Activated T-helper 1 cell treated with anti-CD3 and anti-CD28 coated beads, Interleukin-12 subunit alpha, Interleukin-12 subunit beta, Interleukin-2, Interleukin-4 antibody, amounts not matched to agents 30 ng/mL and 10 ng/mL and 1 ng/mL, durations not matched to agents 14 hours and 24 hours and 36 hours (primary cell): ENCODE measurements at regions of chr10 and their contacts with region 1.

Region 1: DNA sequence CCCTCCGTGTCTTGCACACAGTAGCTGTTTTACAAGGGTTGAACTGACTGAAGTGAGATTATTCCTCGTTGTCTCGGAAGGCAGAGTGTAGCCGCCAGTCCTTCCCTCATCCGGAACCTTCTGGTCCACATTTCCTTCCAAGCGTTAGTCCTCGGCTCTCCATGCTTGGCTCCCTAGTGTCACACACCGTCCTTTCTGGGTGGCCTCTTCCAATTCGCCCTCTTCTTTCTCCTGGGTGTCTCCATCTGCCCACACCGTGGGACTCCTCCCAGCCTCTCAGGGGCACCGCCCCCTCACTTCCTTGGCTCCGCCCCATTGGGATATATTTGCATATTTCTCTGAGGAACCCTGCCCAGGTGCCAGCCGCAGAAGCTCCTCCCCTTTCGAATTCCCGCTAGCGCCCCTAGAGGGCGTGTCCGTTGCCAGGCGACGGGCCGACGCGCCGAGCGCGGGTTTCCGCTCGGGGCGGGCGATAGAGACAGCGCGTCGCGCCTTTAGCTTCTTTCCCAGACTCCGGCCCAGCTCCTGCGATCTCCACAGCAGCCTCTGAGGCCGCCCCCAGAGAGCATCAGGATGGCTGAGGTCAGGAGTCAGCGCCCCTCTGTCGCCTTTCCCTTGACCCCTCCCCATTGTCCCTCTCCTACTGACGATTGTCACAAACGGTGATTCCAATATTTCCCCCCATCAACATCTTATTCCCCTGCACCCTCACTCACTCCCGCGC is at the start of gene CFAP58:
- DNase-seq: peak; percentile 89
- H3K4me3 Mint-ChIP-seq: no peak within 1 kb of the TSS
- H3K27ac Mint-ChIP-seq: peak within 1 kb of the TSS; percentile 67
- H3K4me1 Mint-ChIP-seq: no peaks in the 10 kb centered on the region
- H3K27me3 Mint-ChIP-seq: peaks cover 2% of the 10 kb centered on the region
- total RNA-seq, gene CFAP58: 0.08 and 0.24 TPM in 2 replicates

Region 2: GRCh38 chr10:104218751-104219150 is 134.7 kb before region 1 on chr10:
- intact Hi-C with region 1: no loop called
- DNase-seq: no peak
- H3K4me3 Mint-ChIP-seq: no peak overlapping the region
- H3K27ac Mint-ChIP-seq: no peak overlapping the region
- H3K4me1 Mint-ChIP-seq: no peaks in the 10 kb centered on the region
- H3K27me3 Mint-ChIP-seq: peaks cover 18% of the 10 kb centered on the region

Region 3: DNA sequence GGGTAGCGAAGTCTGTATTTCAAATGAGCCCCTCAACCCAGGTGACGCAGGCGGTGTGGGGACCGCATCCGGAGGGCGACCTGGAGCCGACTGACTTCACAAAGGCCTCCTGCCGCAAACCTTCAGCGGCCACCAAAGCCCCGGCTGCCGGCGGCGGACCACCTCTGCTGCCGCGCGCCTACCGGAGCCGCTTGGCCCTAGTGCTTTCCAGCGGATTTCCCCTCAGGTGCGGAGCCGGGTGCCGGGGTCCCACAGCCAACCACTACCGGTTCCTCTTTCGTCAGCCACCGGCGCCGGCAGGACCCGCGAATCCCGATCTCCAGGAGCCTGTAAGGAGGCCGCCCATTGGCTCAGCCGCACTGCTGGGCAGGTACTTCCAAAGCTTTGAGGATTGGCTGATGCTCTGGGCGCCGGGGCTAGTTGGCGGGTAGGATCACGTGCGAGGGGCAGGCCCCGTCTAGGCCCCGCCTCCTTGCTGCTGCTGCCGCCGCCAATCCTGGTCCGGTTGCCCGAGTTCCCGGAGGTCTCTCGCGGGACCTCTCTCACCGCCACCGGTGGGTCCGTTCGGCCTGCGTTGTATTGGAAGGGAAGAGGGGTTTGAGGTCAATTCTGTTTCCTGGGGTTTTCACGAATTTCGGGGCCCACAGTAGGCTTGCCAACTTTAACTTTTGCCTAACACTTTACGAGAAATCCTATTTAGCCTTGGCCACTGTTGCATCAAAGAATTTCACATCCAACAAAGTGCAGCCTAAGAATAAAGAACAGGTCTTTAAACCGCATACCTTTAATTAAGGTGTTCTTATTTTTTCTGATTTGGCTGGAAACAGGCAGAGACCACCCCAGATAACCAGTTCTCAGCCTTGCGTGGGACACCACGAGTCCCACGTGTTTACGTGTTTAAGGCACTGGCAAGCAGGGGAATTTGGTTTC is 84.5 kb before region 1 on chr10 and contains the start of gene GSTO2:
- intact Hi-C with region 1: loop called (anchors 1 kb)
- DNase-seq: peak; percentile 98
- H3K4me3 Mint-ChIP-seq: peak within 1 kb of the TSS; percentile 92
- H3K27ac Mint-ChIP-seq: peak within 1 kb of the TSS; percentile 96
- H3K4me1 Mint-ChIP-seq: peaks cover 45% of the 10 kb centered on the region
- H3K27me3 Mint-ChIP-seq: peaks cover 4% of the 10 kb centered on the region
- total RNA-seq, gene GSTO2: 1.1 and 1.2 TPM in 2 replicates

Region 4: GRCh38 chr10:104291439-104291951 is 62.0 kb before region 1 on chr10:
- intact Hi-C with region 1: loop called (anchors 1 kb)
- DNase-seq: peak; percentile 82
- H3K4me3 Mint-ChIP-seq: no peak overlapping the region
- H3K27ac Mint-ChIP-seq: peak overlapping the region; percentile 0
- H3K4me1 Mint-ChIP-seq: peaks cover 16% of the 10 kb centered on the region
- H3K27me3 Mint-ChIP-seq: peaks cover 40% of the 10 kb centered on the region

Region 5: GRCh38 chr10:104328896-104329710 is 24.4 kb before region 1 on chr10:
- intact Hi-C with region 1: loop called (anchors 1 kb)
- DNase-seq: peak; percentile 56
- H3K4me3 Mint-ChIP-seq: peak overlapping the region; percentile 68
- H3K27ac Mint-ChIP-seq: peak overlapping the region; percentile 93
- H3K4me1 Mint-ChIP-seq: peaks cover 100% of the 10 kb centered on the region
- H3K27me3 Mint-ChIP-seq: no peaks in the 10 kb centered on the region